HEK293 (cell line): ENCODE measurements at regions of chr6 and their contacts with region 1.

Region 1: GRCh38 chr6:89270951-89271721 is 44.0 kb downstream of the GABRR2 start:
- H3K4me3 ChIP-seq: no peak overlapping the region
- H3K27ac ChIP-seq: no peak overlapping the region
- H3K4me1 ChIP-seq: no peaks in the 10 kb centered on the region
- CTCF ChIP-seq: no peak

Region 2: GRCh38 chr6:89281779-89282246 is 10.7 kb after region 1 on chr6:
- CTCF ChIA-PET with region 1: interaction called, 32 read pairs
- POLR2A ChIA-PET with region 1: no interaction called
- H3K4me3 ChIP-seq: no peak overlapping the region
- H3K27ac ChIP-seq: no peak overlapping the region
- H3K4me1 ChIP-seq: no peaks in the 10 kb centered on the region
- CTCF ChIP-seq: peak; percentile 66

Region 3: GRCh38 chr6:89297695-89298351 is 26.7 kb after region 1 on chr6:
- CTCF ChIA-PET with region 1: no interaction called
- POLR2A ChIA-PET with region 1: no interaction called
- H3K4me3 ChIP-seq: peak overlapping the region; percentile 17
- H3K27ac ChIP-seq: peak overlapping the region; percentile 78; the same call in 1 of the 2 replicates
- H3K4me1 ChIP-seq: peaks cover 17% of the 10 kb centered on the region; the same call in 1 of the 2 replicates
- CTCF ChIP-seq: no peak